ENCODE measurements at regions of chr10 and their contacts with region 1.

Region 1: GRCh38 chr10:27742195-27743011 is 3.2 kb downstream of the MKX start:
- DNase-seq: peak; percentile 58 to 82 (median 77)
- ATAC-seq: peak; percentile 87
- H3K4me3 ChIP-seq: peak overlapping the region; percentile 73
- H3K4me3 Mint-ChIP-seq: peak overlapping the region; percentile 70 to 96 (median 86)
- H3K27ac ChIP-seq: no peak overlapping the region
- H3K27ac Mint-ChIP-seq: peak overlapping the region in 1 of 9 donors; percentile 20
- H3K4me1 ChIP-seq: peaks cover 27 to 42% of the 10 kb centered on the region in 2 donors
- H3K4me1 Mint-ChIP-seq: peaks cover 23 to 44% (median 29%) of the 10 kb centered on the region in 7 donors
- H3K27me3 ChIP-seq: peaks cover 16 to 55% of the 10 kb centered on the region in 2 donors
- H3K27me3 Mint-ChIP-seq: peaks cover 51 to 82% (median 65%) of the 10 kb centered on the region in 5 donors

Region 2: DNA sequence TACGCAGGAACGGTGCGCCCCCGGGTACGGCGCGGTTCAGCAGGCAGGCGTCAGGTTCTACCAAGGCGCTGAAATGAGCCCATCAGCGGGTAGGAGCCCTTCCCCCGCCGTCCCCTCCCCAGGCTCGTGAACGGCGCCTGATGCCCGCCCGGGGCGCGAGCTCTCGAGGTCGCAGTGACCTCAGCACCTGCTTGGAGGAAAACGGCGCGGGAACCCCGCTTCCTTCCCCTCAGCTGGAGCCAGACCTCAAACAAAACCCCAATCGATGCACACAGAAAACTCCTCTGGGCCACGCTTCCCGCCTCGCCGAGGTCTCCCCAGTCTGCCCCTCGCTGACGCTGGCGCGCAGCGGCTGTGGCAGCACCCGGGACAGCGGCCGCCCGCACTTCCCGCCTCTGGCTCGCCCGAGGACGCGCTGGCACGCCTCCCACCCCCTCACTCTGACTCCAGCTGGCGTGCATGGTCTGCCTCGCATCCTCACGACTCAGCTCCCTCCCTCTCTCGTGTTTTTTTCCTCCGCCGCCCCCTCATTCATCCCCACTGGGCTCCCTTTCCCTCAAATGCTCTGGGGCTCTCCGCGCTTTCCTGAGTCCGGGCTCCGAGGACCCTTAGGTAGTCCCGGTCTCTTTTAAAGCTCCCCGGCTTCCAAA is 1526.3 kb before region 1 on chr10:
- CTCF ChIA-PET with region 1: no interaction called
- POLR2A ChIA-PET with region 1: no interaction called
- intact Hi-C with region 1: loop called in 1 of 2 experiments (anchors 10 kb)
- DNase-seq: peak in 2 of 9 donors; percentile 8 to 40
- ATAC-seq: no peak
- H3K4me3 ChIP-seq: no peak overlapping the region
- H3K4me3 Mint-ChIP-seq: peak overlapping the region; percentile 55 to 86 (median 74)
- H3K27ac ChIP-seq: no peak overlapping the region
- H3K27ac Mint-ChIP-seq: peak overlapping the region in 1 of 9 donors; percentile 49
- H3K4me1 ChIP-seq: peaks cover 0 to 2% of the 10 kb centered on the region in 2 donors
- H3K4me1 Mint-ChIP-seq: peaks cover 14 to 42% (median 32%) of the 10 kb centered on the region in 7 donors
- H3K27me3 ChIP-seq: peaks cover 0 to 29% of the 10 kb centered on the region in 2 donors
- H3K27me3 Mint-ChIP-seq: peaks cover 73 to 93% (median 87%) of the 10 kb centered on the region in 5 donors

Region 3: GRCh38 chr10:27464993-27465392 is 277.4 kb before region 1 on chr10:
- CTCF ChIA-PET with region 1: no interaction called
- POLR2A ChIA-PET with region 1: no interaction called
- intact Hi-C with region 1: no loop called
- DNase-seq: peak in 7 of 9 donors; percentile 33 to 69 (median 56)
- ATAC-seq: peak; percentile 81
- H3K4me3 ChIP-seq: no peak overlapping the region
- H3K4me3 Mint-ChIP-seq: peak overlapping the region; percentile 16 to 79 (median 51)
- H3K27ac ChIP-seq: peak overlapping the region; percentile 25
- H3K27ac Mint-ChIP-seq: peak overlapping the region; percentile 51 to 90 (median 81)
- H3K4me1 ChIP-seq: peaks cover 9 to 11% of the 10 kb centered on the region in 2 donors
- H3K4me1 Mint-ChIP-seq: peaks cover 29 to 44% (median 37%) of the 10 kb centered on the region in 7 donors
- H3K27me3 ChIP-seq: no peaks in the 10 kb centered on the region
- H3K27me3 Mint-ChIP-seq: peaks cover 0 to 6% (median 0%) of the 10 kb centered on the region in 5 donors

Region 4: GRCh38 chr10:27558612-27559020 is 183.8 kb before region 1 on chr10:
- CTCF ChIA-PET with region 1: no interaction called
- POLR2A ChIA-PET with region 1: no interaction called
- intact Hi-C with region 1: loop called in 1 of 2 experiments (anchors 5 kb)
- DNase-seq: peak in 3 of 9 donors; percentile 10 to 25 (median 15)
- ATAC-seq: peak; percentile 63
- H3K4me3 ChIP-seq: no peak overlapping the region
- H3K4me3 Mint-ChIP-seq: no peak overlapping the region
- H3K27ac ChIP-seq: no peak overlapping the region
- H3K27ac Mint-ChIP-seq: peak overlapping the region in 1 of 9 donors; percentile 36
- H3K4me1 ChIP-seq: peaks cover 0 to under 1% of the 10 kb centered on the region in 2 donors
- H3K4me1 Mint-ChIP-seq: peaks cover 0 to 4% (median 0%) of the 10 kb centered on the region in 7 donors
- H3K27me3 ChIP-seq: no peaks in the 10 kb centered on the region
- H3K27me3 Mint-ChIP-seq: peaks cover 0 to 16% (median 0%) of the 10 kb centered on the region in 5 donors

Region 5: GRCh38 chr10:27783660-27784059 is 41.3 kb after region 1 on chr10:
- CTCF ChIA-PET with region 1: no interaction called
- POLR2A ChIA-PET with region 1: no interaction called
- intact Hi-C with region 1: no loop called
- DNase-seq: peak in 6 of 9 donors; percentile 8 to 39 (median 20)
- ATAC-seq: peak; percentile 77
- H3K4me3 ChIP-seq: no peak overlapping the region
- H3K4me3 Mint-ChIP-seq: no peak overlapping the region
- H3K27ac ChIP-seq: no peak overlapping the region
- H3K27ac Mint-ChIP-seq: no peak overlapping the region
- H3K4me1 ChIP-seq: no peaks in the 10 kb centered on the region
- H3K4me1 Mint-ChIP-seq: no peaks in the 10 kb centered on the region
- H3K27me3 ChIP-seq: no peaks in the 10 kb centered on the region
- H3K27me3 Mint-ChIP-seq: peaks cover 4 to 26% (median 15%) of the 10 kb centered on the region in 5 donors

Region 6: DNA sequence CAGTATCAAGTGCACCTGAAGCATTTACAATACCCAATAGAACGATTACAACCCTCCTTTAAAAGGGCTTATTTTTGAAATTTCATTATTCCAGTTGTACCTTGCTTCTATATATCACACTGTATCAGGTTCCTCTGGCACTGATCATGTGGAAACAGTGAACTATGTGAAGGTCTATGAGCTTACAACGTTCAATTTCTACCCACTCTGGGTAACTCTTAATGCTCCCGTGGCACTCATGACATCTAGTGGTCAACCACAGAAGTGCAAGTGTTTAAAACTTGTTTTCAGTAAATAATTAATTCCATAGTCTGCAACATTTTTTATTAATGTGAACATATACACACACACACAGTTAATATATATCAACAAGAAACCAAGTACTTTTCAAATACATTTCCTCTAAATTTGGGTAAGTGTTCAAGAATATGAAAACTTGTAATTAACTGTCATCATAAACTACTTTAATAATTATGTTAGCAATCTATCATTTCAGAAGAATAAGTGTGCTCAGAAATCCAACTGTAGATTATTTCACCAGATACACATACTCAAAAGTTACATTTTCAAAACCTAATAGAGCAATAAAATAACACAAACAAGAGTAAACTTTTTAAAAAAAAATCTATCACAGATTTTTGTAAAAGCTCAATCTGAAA is 499.5 kb after region 1 on chr10:
- CTCF ChIA-PET with region 1: interaction called, 9 read pairs
- POLR2A ChIA-PET with region 1: no interaction called
- intact Hi-C with region 1: loop called (anchors 1 kb)
- DNase-seq: peak in 7 of 9 donors; percentile 16 to 54 (median 43)
- ATAC-seq: peak; percentile 90
- H3K4me3 ChIP-seq: no peak overlapping the region
- H3K4me3 Mint-ChIP-seq: no peak overlapping the region
- H3K27ac ChIP-seq: no peak overlapping the region
- H3K27ac Mint-ChIP-seq: no peak overlapping the region
- H3K4me1 ChIP-seq: peaks cover 0 to 12% of the 10 kb centered on the region in 2 donors
- H3K4me1 Mint-ChIP-seq: peaks cover 5 to 59% (median 39%) of the 10 kb centered on the region in 7 donors
- H3K27me3 ChIP-seq: no peaks in the 10 kb centered on the region
- H3K27me3 Mint-ChIP-seq: peaks cover 0 to 12% (median 0%) of the 10 kb centered on the region in 5 donors

Region 7: DNA sequence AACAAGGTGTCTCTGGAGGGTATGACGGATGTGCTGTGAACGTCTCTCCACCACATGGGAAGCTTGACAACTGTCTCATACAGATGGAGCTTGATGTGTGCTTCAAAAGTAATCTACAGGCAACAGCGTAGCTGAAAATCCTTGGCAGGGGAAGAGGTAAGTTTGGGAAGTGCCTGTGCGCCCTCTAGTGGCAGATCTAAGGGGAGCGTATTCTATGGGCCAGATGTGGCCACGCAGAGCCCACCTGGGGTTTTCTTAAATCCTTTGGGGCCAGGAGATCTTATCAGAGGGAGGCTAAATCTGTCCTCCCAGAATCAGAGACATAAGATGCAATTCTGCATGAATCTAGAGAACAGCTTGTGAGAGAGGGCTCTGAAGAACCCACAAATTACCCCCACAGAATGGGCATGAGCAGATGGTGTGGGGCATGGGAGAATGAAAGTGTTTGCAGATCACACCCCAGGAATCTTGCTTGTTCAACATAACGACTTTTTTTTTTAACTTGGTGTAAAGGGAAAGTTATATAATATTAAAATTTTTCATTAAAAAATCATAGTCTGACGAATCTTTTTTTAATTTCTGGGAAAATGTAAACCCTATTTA is 651.7 kb after region 1 on chr10:
- CTCF ChIA-PET with region 1: interaction called, 6 read pairs
- POLR2A ChIA-PET with region 1: no interaction called
- intact Hi-C with region 1: loop called in 1 of 2 experiments (anchors 1 kb)
- DNase-seq: peak; percentile 36 to 70 (median 53)
- ATAC-seq: peak; percentile 87
- H3K4me3 ChIP-seq: no peak overlapping the region
- H3K4me3 Mint-ChIP-seq: no peak overlapping the region
- H3K27ac ChIP-seq: no peak overlapping the region
- H3K27ac Mint-ChIP-seq: peak overlapping the region in 2 of 9 donors; percentile 12 to 35
- H3K4me1 ChIP-seq: no peaks in the 10 kb centered on the region
- H3K4me1 Mint-ChIP-seq: peaks cover 0 to 6% (median 5%) of the 10 kb centered on the region in 7 donors
- H3K27me3 ChIP-seq: no peaks in the 10 kb centered on the region
- H3K27me3 Mint-ChIP-seq: peaks cover 0 to 6% (median 0%) of the 10 kb centered on the region in 5 donors

Measured in naive thymus-derived CD4-positive, alpha-beta T cell (primary cell).